Heart right ventricle (tissue), 16 donors: ENCODE measurements at regions of chr7 and their contacts with region 1.

Region 1: GRCh38 chr7:134932707-134933370 is 53.5 kb upstream of the AGBL3 start:
- DNase-seq: peak; percentile 53 to 54
- ATAC-seq: peak; percentile 56 to 85 (median 80)
- H3K4me3 ChIP-seq: peak overlapping the region in 5 of 10 donors; percentile 2 to 16 (median 8)
- H3K27ac ChIP-seq: peak overlapping the region in 9 of 10 donors; percentile 41 to 81 (median 67)
- H3K4me1 ChIP-seq: peaks cover 0 to 81% (median 54%) of the 10 kb centered on the region in 9 donors
- H3K27me3 ChIP-seq: no peaks in the 10 kb centered on the region
- CTCF ChIP-seq: no peak

Region 2: GRCh38 chr7:134750083-134751062 is 182.5 kb before region 1 on chr7:
- intact Hi-C with region 1: loop called in 1 of 10 experiments (anchors 10 kb)
- DNase-seq: peak; percentile 27 to 49
- ATAC-seq: peak; percentile 45 to 78 (median 59)
- H3K4me3 ChIP-seq: peak overlapping the region in 1 of 10 donors; percentile 7
- H3K27ac ChIP-seq: no peak overlapping the region
- H3K4me1 ChIP-seq: peaks cover 0 to 6% (median 0%) of the 10 kb centered on the region in 9 donors
- H3K27me3 ChIP-seq: no peaks in the 10 kb centered on the region
- CTCF ChIP-seq: peak; percentile 54 to 77 (median 66)

Region 3: GRCh38 chr7:134761266-134761665 is 171.6 kb before region 1 on chr7:
- intact Hi-C with region 1: loop called in 2 of 10 experiments (anchors 5 to 10 kb)
- DNase-seq: no peak
- ATAC-seq: no peak
- H3K4me3 ChIP-seq: no peak overlapping the region
- H3K27ac ChIP-seq: peak overlapping the region in 1 of 10 donors; percentile 7
- H3K4me1 ChIP-seq: peaks cover 0 to 23% (median 8%) of the 10 kb centered on the region in 9 donors
- H3K27me3 ChIP-seq: no peaks in the 10 kb centered on the region
- CTCF ChIP-seq: no peak

Region 4: DNA sequence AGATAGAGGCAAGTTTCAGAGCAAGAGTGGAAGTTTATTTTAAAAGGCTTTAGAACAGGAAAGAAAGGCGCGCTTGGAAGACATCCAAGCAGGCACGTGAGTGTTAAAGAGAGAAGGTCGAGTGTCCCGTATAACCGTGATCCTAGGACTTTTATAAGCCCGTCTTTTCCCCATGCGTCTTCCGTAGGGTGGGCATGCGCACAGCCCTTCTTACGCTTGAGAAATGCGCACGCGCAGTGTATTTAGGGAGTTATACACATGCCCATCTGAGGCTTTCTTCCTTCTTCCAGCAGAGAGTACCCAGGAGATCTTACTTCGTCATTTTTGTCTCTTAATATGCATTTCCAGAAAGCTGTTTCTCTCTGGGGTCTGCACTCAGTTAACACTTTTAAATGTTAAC is 101.0 kb before region 1 on chr7:
- intact Hi-C with region 1: loop called in 1 of 10 experiments (anchors 5 kb)
- DNase-seq: peak; percentile 44 to 50
- ATAC-seq: peak in 3 of 8 donors; percentile 28 to 47 (median 29)
- H3K4me3 ChIP-seq: peak overlapping the region in 4 of 10 donors; percentile 4 to 21 (median 14)
- H3K27ac ChIP-seq: peak overlapping the region in 7 of 10 donors; percentile 34 to 83 (median 59)
- H3K4me1 ChIP-seq: peaks cover 2 to 99% (median 65%) of the 10 kb centered on the region in 9 donors
- H3K27me3 ChIP-seq: no peaks in the 10 kb centered on the region
- CTCF ChIP-seq: no peak

Region 5: GRCh38 chr7:134891262-134891695 is 41.6 kb before region 1 on chr7:
- intact Hi-C with region 1: loop called in 6 of 10 experiments (anchors 5 kb)
- DNase-seq: peak; percentile 74 to 90
- ATAC-seq: peak; percentile 89 to 95 (median 92)
- H3K4me3 ChIP-seq: peak overlapping the region; percentile 15 to 64 (median 54)
- H3K27ac ChIP-seq: peak overlapping the region; percentile 71 to 89 (median 84)
- H3K4me1 ChIP-seq: peaks cover 6 to 74% (median 49%) of the 10 kb centered on the region in 9 donors
- H3K27me3 ChIP-seq: peaks cover 0 to 11% (median 0%) of the 10 kb centered on the region in 7 donors
- CTCF ChIP-seq: no peak